Endothelial cell of umbilical vein (primary cell): ENCODE measurements at regions of chr11 and their contacts with region 1.

Region 1: DNA sequence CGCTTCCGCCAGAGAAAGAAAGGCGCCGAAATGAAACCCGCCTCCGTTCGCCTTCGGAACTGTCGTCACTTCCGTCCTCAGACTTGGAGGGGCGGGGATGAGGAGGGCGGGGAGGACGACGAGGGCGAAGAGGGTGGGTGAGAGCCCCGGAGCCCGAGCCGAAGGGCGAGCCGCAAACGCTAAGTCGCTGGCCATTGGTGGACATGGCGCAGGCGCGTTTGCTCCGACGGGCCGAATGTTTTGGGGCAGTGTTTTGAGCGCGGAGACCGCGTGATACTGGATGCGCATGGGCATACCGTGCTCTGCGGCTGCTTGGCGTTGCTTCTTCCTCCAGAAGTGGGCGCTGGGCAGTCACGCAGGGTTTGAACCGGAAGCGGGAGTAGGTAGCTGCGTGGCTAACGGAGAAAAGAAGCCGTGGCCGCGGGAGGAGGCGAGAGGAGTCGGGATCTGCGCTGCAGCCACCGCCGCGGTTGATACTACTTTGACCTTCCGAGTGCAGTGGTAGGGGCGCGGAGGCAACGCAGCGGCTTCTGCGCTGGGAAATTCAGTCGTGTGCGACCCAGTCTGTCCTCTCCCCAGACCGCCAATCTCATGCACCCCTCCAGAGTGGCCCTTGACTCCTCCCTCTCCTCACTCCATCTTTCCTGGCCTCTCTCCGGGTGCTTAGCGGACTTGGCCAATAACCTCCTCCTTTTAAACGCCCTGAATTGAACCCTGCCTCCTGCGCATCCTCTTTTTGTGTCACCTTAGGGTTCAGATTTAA is at the start of gene ATM:
- DNase-seq: peak; percentile 100
- H3K4me3 ChIP-seq: peak within 1 kb of the TSS; percentile 43 to 88 (median 64)
- H3K27ac ChIP-seq: peak within 1 kb of the TSS; percentile 85
- H3K4me1 ChIP-seq: peaks cover 27% of the 10 kb centered on the region
- H3K27me3 ChIP-seq: no peaks in the 10 kb centered on the region
- CTCF ChIP-seq: peak; percentile 86 to 92
- POLR2A ChIP-seq: peak; percentile 87
- total RNA-seq, gene ATM: 49.7 and 52.1 TPM in 2 replicates

Region 2: GRCh38 chr11:107840129-107840484 is 382.8 kb before region 1 on chr11:
- CTCF ChIA-PET with region 1: no interaction called
- POLR2A ChIA-PET with region 1: no interaction called
- dilution Hi-C with region 1: no loop called
- intact Hi-C with region 1: loop called (anchors 10 kb)
- DNase-seq: no peak
- H3K4me3 ChIP-seq: peak overlapping the region in 2 of 3 experiments; percentile 2 to 49
- H3K27ac ChIP-seq: peak overlapping the region; percentile 91
- H3K4me1 ChIP-seq: peaks cover 37% of the 10 kb centered on the region
- H3K27me3 ChIP-seq: no peaks in the 10 kb centered on the region
- CTCF ChIP-seq: no peak
- POLR2A ChIP-seq: no peak

Region 3: GRCh38 chr11:108121274-108122155 is 101.4 kb before region 1 on chr11 and contains the start of gene ACAT1:
- CTCF ChIA-PET with region 1: interaction called, 15 read pairs
- POLR2A ChIA-PET with region 1: no interaction called
- dilution Hi-C with region 1: no loop called
- intact Hi-C with region 1: loop called (anchors 1 kb)
- DNase-seq: peak; percentile 92
- H3K4me3 ChIP-seq: peak within 1 kb of the TSS; percentile 58 to 85 (median 60)
- H3K27ac ChIP-seq: peak within 1 kb of the TSS; percentile 19
- H3K4me1 ChIP-seq: peaks cover 16% of the 10 kb centered on the region
- H3K27me3 ChIP-seq: no peaks in the 10 kb centered on the region
- CTCF ChIP-seq: peak in 1 of 2 donors; percentile 38
- POLR2A ChIP-seq: peak; percentile 87
- total RNA-seq, gene ACAT1: 51.7 and 59.9 TPM in 2 replicates

Region 4: DNA sequence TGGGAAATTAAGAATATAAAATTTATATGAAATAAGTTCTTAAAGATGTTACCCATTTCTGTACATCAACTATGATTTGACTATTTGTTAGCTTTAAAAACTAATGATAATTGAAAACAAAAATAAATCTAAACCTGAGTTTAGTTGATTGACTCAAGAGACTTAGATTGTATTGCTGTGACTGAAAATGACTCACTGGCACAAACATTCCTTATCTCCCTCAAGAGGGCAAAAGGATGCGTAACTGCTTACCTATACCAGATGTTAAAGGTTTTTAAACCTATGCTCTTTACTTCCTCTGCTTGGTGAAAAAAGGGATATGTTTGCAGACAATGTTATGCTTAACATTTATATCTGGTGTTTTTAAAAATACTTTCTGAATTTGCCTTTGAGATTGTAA is 30.3 kb after region 1 on chr11:
- CTCF ChIA-PET with region 1: interaction called, 5 read pairs
- POLR2A ChIA-PET with region 1: no interaction called
- dilution Hi-C with region 1: no loop called
- intact Hi-C with region 1: loop called (anchors 2 kb)
- DNase-seq: peak; percentile 10
- H3K4me3 ChIP-seq: no peak overlapping the region
- H3K27ac ChIP-seq: no peak overlapping the region
- H3K4me1 ChIP-seq: peaks cover 13% of the 10 kb centered on the region
- H3K27me3 ChIP-seq: no peaks in the 10 kb centered on the region
- CTCF ChIP-seq: no peak
- POLR2A ChIP-seq: no peak

Region 5: GRCh38 chr11:108324587-108324986 is 101.7 kb after region 1 on chr11:
- CTCF ChIA-PET with region 1: interaction called, 3 read pairs
- POLR2A ChIA-PET with region 1: no interaction called
- dilution Hi-C with region 1: no loop called
- intact Hi-C with region 1: loop called (anchors 5 kb)
- DNase-seq: no peak
- H3K4me3 ChIP-seq: no peak overlapping the region
- H3K27ac ChIP-seq: no peak overlapping the region
- H3K4me1 ChIP-seq: no peaks in the 10 kb centered on the region
- H3K27me3 ChIP-seq: no peaks in the 10 kb centered on the region
- CTCF ChIP-seq: no peak
- POLR2A ChIP-seq: no peak

Region 6: GRCh38 chr11:108497317-108498045 is 274.6 kb after region 1 on chr11:
- CTCF ChIA-PET with region 1: no interaction called
- POLR2A ChIA-PET with region 1: no interaction called
- dilution Hi-C with region 1: no loop called
- intact Hi-C with region 1: loop called (anchors 1 kb)
- DNase-seq: peak; percentile 99
- H3K4me3 ChIP-seq: peak overlapping the region; percentile 26 to 71 (median 48)
- H3K27ac ChIP-seq: peak overlapping the region; percentile 81
- H3K4me1 ChIP-seq: peaks cover 10% of the 10 kb centered on the region
- H3K27me3 ChIP-seq: no peaks in the 10 kb centered on the region
- CTCF ChIP-seq: no peak
- POLR2A ChIP-seq: peak; percentile 89

Region 7: GRCh38 chr11:108647701-108648527 is 425.0 kb after region 1 on chr11:
- CTCF ChIA-PET with region 1: interaction called, 4 read pairs
- POLR2A ChIA-PET with region 1: no interaction called
- dilution Hi-C with region 1: no loop called
- intact Hi-C with region 1: loop called (anchors 1 kb)
- DNase-seq: peak; percentile 77
- H3K4me3 ChIP-seq: no peak overlapping the region
- H3K27ac ChIP-seq: no peak overlapping the region
- H3K4me1 ChIP-seq: no peaks in the 10 kb centered on the region
- H3K27me3 ChIP-seq: peaks cover 0 to 3% of the 10 kb centered on the region in 2 experiments
- CTCF ChIP-seq: peak; percentile 77 to 84
- POLR2A ChIP-seq: no peak